Mammary epithelial cell (primary cell): ENCODE measurements at regions of chr6 and their contacts with region 1.

Region 1: DNA sequence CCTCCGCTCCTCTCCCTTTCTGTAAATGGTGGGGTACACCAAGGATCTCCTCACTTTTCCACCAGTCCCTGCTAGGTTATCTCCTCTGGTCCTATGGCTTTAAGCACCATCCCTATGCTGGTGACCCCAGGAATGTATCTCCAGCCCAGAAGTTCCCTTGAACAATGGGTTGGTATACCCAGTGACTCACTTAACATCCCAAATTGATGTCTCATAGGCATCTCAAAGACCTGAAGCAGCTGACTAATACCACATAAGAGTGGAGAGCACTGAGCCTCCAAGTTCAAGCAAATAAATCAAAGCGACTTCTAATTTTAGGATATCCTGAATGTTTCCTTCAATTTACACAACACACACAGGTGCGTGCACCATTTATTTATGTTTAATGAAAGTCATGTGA is 48.3 kb downstream of the ADGRF1 start:
- DNase-seq: peak; percentile 95
- H3K4me3 ChIP-seq: no peak overlapping the region
- H3K27ac ChIP-seq: peak overlapping the region; percentile 77
- H3K4me1 ChIP-seq: peaks cover 41% of the 10 kb centered on the region
- H3K27me3 ChIP-seq: no peaks in the 10 kb centered on the region
- CTCF ChIP-seq: no peak

Region 2: DNA sequence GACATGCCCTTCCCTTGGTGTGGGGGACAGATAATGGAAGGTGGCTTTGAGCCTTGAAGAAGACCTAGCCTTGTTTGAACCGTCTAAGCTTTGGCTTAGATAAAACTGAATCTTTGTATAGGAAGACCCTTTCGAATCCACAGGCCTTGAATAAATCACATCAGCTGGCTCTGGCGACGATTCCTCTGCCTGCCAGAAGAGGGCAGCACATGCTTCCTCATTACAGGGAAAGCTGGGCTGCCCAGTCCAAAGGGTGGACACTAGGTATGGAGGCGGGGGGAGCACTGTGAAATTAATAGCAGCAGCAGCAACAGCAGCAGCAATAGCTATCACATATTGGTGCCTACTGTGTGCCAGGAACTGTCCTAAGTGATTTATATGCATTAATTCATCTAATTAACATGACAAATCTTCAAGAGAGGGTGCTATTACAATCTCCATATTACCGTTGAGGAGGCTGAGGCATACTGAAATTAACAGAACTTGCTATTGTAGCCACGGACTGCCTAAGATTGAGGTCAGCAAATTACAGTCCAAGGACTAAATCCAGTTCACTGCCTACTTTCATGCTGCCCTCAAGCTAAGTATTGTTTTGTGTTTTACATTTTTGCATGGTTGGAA is 1063.3 kb before region 1 on chr6:
- CTCF ChIA-PET with region 1: no interaction called
- dilution Hi-C with region 1: no loop called
- in situ Hi-C with region 1: no loop called
- intact Hi-C with region 1: loop called (anchors 2 kb)
- DNase-seq: peak; percentile 32
- H3K4me3 ChIP-seq: no peak overlapping the region
- H3K27ac ChIP-seq: no peak overlapping the region
- H3K4me1 ChIP-seq: no peaks in the 10 kb centered on the region
- H3K27me3 ChIP-seq: no peaks in the 10 kb centered on the region
- CTCF ChIP-seq: peak; percentile 97 to 98

Region 3: DNA sequence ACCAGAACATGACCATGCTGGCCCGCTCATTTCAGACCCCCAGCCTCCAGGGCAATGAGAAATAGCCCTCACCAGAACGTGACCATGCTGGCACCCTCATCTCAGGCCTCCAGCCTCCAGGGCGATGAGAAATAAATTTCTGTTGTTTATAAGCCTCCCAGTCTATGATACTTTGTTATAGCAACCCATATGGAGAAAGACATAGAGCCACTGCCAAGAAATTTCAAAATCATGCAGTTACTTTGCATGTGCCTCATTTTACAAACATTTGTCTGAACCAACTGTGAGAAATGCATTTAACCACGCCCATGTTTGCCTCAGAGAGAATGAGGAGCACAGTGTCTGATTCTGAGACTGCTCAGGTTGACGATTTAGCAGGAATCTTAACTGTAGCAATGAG is 356.7 kb before region 1 on chr6:
- CTCF ChIA-PET with region 1: no interaction called
- dilution Hi-C with region 1: no loop called
- in situ Hi-C with region 1: no loop called
- intact Hi-C with region 1: loop called (anchors 5 kb)
- DNase-seq: peak; percentile 92
- H3K4me3 ChIP-seq: no peak overlapping the region
- H3K27ac ChIP-seq: peak overlapping the region; percentile 57
- H3K4me1 ChIP-seq: peaks cover 24% of the 10 kb centered on the region
- H3K27me3 ChIP-seq: no peaks in the 10 kb centered on the region
- CTCF ChIP-seq: no peak

Region 4: DNA sequence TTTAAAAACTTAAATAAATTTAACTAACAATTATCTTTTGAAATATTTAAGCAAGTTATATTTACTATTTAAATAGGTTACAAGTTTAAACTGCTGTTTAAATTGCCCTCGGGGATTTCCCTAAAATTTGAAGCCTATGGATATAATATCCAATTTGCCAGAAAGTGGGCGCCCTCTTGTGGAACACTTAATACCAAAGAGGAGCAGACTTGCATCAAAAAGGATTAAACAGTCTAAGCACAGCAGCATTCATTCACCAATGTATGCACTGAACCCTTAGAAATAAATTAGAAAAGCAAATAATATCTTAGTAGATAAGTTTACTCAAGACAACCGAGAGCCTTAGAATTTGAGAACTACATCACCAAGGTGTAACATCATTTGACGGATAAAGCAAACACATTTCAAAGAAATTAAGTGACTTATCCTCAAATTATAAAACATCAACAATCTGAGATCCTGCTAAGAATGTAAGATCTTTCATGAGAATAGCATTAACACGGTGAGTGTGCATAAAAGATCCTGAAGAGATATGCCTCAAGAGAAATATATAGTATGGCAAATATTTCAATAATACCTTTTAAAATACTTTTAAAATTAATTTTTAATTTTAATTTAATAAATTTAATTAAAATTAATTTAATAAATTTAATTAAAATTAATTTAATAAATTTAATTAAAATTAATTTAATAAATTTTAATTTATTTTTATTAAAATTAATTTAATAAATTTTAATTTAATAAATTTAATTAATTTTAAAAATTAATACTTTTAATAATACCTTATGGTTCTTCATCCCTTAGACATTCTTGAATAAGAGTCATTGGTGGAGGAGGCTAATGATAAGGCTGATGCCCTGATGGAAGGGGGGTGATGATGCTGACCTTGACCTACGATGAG is 212.1 kb before region 1 on chr6:
- CTCF ChIA-PET with region 1: no interaction called
- dilution Hi-C with region 1: no loop called
- in situ Hi-C with region 1: no loop called
- intact Hi-C with region 1: loop called (anchors 2 kb)
- DNase-seq: peak; percentile 57
- H3K4me3 ChIP-seq: no peak overlapping the region
- H3K27ac ChIP-seq: no peak overlapping the region
- H3K4me1 ChIP-seq: no peaks in the 10 kb centered on the region
- H3K27me3 ChIP-seq: no peaks in the 10 kb centered on the region
- CTCF ChIP-seq: peak; percentile 70 to 78

Region 5: DNA sequence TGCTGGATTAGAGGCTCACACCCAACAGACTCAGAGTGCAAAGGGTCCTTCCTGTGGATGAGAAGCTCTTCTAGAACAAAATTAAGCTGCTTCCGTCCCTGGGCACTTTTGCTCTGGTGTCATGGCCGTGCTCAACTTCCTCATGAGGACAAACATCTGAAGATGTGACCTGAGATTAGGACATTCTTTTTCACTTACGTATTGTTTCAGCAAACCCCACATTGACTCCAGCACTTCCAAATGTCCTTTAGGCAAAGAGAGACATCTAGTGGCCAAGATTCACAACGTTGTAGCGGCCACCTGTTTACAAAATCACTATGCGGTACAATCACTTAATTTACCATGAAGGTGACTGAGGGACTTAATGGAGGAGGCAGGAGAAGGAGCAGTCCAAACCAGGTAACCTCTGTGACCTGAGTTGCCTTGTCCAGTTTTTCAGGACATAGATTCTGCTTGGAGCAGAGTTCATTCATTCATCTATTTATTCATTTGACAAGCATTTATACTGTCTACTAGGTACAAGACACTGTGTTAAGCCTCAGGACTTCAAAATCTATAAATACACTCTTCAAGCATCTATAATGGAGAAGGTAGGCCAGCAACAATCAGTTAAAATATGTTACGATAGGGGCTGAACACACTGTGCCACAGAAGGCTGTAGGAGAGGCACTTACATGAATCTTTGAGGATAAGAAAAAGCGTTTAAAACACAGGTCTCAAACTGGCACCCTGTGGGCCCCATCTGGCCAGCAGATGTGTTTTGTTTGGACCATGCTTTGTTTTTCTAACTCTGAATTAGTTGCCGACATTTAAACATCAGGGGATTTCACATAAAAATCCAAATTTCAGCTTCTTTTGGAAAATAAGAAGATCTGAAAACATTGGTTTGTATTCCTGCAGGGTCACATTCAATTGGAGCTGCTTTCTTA is 53.9 kb after region 1 on chr6:
- CTCF ChIA-PET with region 1: no interaction called
- dilution Hi-C with region 1: no loop called
- in situ Hi-C with region 1: no loop called
- intact Hi-C with region 1: loop called (anchors 1 kb)
- DNase-seq: peak; percentile 75
- H3K4me3 ChIP-seq: no peak overlapping the region
- H3K27ac ChIP-seq: peak overlapping the region; percentile 37
- H3K4me1 ChIP-seq: peaks cover 44% of the 10 kb centered on the region
- H3K27me3 ChIP-seq: no peaks in the 10 kb centered on the region
- CTCF ChIP-seq: peak; percentile 83 to 86

Region 6: GRCh38 chr6:47352194-47352920 is 358.5 kb after region 1 on chr6:
- CTCF ChIA-PET with region 1: no interaction called
- dilution Hi-C with region 1: no loop called
- in situ Hi-C with region 1: no loop called
- intact Hi-C with region 1: no loop called
- DNase-seq: no peak
- H3K4me3 ChIP-seq: no peak overlapping the region
- H3K27ac ChIP-seq: no peak overlapping the region
- H3K4me1 ChIP-seq: no peaks in the 10 kb centered on the region
- H3K27me3 ChIP-seq: no peaks in the 10 kb centered on the region
- CTCF ChIP-seq: no peak